AG04449 (cell line): ENCODE measurements at regions of chr17 and their contacts with region 1.

Region 1: GRCh38 chr17:76153640-76154039 is 12.6 kb upstream of the FOXJ1 start:
- DNase-seq: no peak
- H3K4me3 ChIP-seq: no peak overlapping the region
- CTCF ChIP-seq: peak; percentile 13

Region 2: DNA sequence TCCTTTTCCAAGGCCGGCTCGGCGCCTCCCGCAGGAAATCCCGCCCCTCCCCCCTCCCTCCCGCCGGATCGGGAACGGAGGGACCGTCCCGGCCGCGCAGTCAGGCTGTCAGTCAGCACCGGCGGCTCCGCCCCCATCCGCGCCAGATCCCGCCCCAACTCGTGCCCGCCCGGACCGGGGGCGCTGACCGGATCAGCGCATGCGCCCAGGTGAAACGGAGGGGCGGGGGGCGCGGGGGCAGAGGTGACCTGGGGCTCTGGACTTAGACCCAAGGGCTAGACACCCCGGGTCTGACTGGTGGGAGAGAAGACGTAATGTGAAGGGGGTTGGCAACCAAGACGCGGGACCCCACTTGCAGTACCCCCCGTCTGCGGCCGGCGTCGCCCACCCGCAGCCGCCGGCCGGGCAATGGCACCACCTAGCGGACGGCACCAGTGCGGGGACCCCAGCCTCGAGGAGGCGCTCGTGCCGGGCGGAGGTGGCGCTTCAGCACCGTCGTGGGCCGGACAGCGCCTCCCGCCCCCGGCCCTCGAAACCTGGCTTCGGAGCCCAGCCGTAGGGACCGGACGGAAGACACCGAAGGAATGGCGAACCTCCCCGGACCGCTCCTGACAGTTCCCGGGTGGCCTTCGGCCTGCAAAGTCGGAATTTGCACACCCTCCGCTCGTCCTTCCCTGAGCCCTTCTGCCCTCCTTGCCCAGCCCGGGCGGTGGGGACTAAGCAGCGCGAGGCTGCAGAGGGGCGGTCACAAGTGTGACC is 638.0 kb before region 1 on chr17 and contains the start of gene CASKIN2:
- CTCF ChIA-PET with region 1: no interaction called
- POLR2A ChIA-PET with region 1: no interaction called
- DNase-seq: peak; percentile 10
- H3K4me3 ChIP-seq: peak within 1 kb of the TSS; percentile 80
- CTCF ChIP-seq: peak; percentile 100

Region 3: DNA sequence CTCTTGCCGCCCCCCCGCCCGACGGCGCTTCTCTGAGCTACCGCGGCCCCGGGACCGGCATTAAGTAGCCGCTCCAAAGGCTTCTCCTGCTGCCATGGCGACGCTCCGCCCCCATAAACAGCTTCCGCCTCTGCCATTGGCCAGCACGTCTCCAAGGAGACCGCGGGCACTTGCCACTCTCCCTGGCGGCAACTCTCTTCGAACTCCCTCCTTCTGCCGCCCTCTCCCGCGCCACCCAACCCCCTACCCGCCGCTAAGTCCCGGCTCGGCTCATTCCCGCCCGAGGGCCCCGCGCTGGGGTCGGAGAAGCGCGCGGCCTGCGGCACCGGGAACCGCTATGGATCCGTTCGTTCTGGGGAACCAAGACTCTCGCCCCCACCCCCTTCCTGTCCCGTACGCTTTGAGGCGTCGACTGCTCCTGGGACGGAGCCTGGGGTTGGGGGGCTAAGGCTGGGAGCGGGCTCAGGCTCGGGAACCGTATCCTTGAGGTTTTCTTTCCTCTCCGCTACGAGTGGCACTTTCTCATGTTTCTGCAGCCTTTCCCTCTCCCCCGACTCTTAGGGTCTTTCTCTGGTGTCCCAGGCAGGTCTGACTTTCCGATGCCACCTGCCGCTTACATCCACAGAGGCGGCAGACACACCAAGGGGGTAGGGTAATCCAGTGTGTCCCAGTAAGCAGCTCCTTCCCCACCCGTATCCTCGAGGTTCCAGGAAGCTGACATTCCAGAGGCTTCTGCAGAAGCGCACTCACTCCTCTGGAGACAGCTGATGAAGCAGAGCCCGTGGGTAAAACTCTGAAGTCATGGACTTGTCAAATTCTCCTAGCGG is 12.2 kb before region 1 on chr17 and contains the start of gene FOXJ1:
- CTCF ChIA-PET with region 1: interaction called, 27 read pairs
- POLR2A ChIA-PET with region 1: no interaction called
- DNase-seq: peak; percentile 2
- H3K4me3 ChIP-seq: peak within 1 kb of the TSS; percentile 57
- CTCF ChIP-seq: no peak